A549 (cell line): ENCODE measurements at regions of chr20 and their contacts with region 1.

Region 1: DNA sequence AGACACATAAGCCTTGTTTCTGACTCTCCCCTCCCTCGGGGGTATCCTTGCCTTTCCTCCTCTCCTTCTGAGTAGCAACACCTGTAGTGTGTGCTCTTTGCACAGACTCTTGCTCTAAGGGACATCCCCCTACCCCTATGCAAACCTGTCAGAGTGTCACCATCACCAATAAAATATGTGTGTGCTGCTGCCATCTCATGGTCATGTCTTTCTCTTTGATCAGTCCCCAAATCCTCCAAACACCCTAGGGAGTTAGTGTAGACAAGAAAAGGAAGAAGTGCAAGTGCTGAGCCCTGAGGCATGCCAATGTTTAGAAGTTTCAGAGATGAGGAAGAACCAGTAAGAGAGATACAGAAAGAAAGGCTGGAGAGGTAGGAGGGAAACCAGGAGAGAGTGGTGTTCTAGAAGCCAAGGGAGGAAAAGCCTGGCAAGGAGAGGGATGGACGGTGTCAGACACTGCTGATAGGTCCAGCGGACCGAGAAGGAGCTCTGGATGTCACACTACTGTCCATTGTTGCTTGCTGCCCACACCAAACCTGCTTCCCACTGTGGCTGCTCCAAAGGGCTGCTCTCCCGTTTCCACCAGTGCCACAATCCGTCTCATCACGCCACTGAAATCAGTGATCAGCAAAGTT is 16.4 kb downstream of the TRMT6 start:
- DNase-seq: peak; percentile 41 to 48
- ATAC-seq: peak; percentile 81 to 83
- H3K4me3 ChIP-seq: no peak overlapping the region
- H3K27ac ChIP-seq: no peak overlapping the region
- H3K4me1 ChIP-seq: no peaks in the 10 kb centered on the region
- CTCF ChIP-seq: peak; percentile 72
- EP300 ChIP-seq: no peak
- POLR2A ChIP-seq: no peak
- RAD21 ChIP-seq: peak; percentile 73 to 84

Region 2: DNA sequence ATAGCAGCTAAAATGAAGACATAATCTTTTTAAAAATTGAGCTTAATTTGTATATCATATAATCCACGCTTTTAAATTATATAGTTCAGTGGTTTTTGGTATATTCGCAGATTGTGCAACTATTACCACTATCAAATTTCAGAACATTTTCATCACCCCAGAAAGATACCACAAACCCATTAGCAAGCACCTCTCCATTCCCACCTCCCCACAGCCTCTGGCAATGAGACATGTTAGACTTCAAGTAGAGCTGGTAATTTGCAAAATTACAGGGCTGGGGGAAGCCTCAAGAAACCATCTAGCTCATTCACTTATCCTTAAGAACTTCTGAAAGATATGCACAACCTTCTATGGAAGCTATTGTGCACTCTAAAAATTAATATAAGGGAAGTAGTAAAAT is 20.8 kb before region 1 on chr20:
- CTCF ChIA-PET with region 1: interaction called, 25 read pairs
- POLR2A ChIA-PET with region 1: no interaction called
- DNase-seq: no peak
- ATAC-seq: no peak
- H3K4me3 ChIP-seq: no peak overlapping the region
- H3K27ac ChIP-seq: no peak overlapping the region
- H3K4me1 ChIP-seq: peaks cover 6% of the 10 kb centered on the region; the same call in 1 of the 3 replicates
- CTCF ChIP-seq: no peak
- EP300 ChIP-seq: no peak
- POLR2A ChIP-seq: no peak
- RAD21 ChIP-seq: no peak

Region 3: DNA sequence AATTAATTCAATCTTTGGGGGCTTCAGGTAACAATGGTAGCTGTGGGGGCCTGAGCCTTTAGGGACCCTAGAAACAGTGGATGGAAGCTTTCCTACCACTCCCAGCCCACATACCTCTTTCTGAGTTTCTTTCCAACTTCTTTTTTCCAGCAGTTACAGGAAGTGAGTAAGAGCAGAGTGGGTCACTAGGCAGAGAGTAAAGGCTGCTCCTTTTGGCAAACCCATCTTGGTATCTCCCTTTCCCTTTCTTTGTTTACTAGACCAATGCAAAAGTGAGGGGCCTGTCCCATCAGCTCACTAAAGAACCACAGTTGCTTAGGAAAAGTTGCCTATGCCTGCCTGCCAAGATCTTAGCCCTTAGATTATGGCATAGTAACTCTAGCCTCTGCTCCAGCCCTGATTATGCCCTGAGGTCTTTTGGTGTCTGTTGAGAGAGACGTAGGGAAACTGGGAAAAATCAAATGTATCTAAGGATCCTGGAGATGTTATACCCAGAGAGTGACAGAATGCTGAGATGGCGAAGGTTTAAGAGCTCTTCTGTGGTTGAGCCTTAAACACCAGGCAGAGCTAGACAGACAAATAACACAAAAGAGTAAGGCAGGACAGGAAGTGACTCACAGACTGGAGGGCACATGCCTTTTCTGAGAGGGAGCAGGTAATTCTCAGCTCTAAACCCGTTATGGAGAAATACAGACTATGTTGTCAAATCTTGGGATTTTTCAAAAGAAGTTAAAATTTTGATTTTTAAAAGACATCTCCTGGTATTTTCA is 14.9 kb before region 1 on chr20:
- CTCF ChIA-PET with region 1: interaction called, 26 read pairs
- POLR2A ChIA-PET with region 1: no interaction called
- DNase-seq: peak; percentile 51 to 56
- ATAC-seq: peak; percentile 78 to 82
- H3K4me3 ChIP-seq: no peak overlapping the region
- H3K27ac ChIP-seq: peak overlapping the region; percentile 50 to 64
- H3K4me1 ChIP-seq: peaks cover 17% of the 10 kb centered on the region
- CTCF ChIP-seq: no peak
- EP300 ChIP-seq: no peak; a peak in 1 of 5 replicates
- POLR2A ChIP-seq: no peak
- RAD21 ChIP-seq: no peak

Region 4: GRCh38 chr20:5950271-5951031 is 16.5 kb after region 1 on chr20 and contains the starts of genes MCM8 and TRMT6:
- CTCF ChIA-PET with region 1: interaction called, 16 read pairs
- POLR2A ChIA-PET with region 1: interaction called, 3 read pairs
- DNase-seq: peak; percentile 96 to 98
- ATAC-seq: peak; percentile 98 to 100
- H3K4me3 ChIP-seq: peak within 1 kb of the TSS; percentile 93
- H3K27ac ChIP-seq: peak within 1 kb of the TSS; percentile 93 to 94
- H3K4me1 ChIP-seq: peaks cover 38% of the 10 kb centered on the region
- CTCF ChIP-seq: no peak
- EP300 ChIP-seq: no peak
- POLR2A ChIP-seq: peak; percentile 89
- RAD21 ChIP-seq: 0 out of 5 replicates have a peak, but pooled peaks have one; percentile 6 to 26
- polyA plus RNA-seq, gene MCM8: 29.5 and 36.1 TPM in 2 replicates
- polyA plus RNA-seq, gene TRMT6: 30.8 and 43.1 TPM in 2 replicates